ENCODE measurements at regions of chr1 and their contacts with region 1.

Region 1: GRCh38 chr1:111133866-111134265 is 6.0 kb downstream of the DRAM2 start:
- DNase-seq: no peak
- H3K4me3 ChIP-seq: no peak overlapping the region
- H3K27ac ChIP-seq: peak overlapping the region; percentile 98
- H3K4me1 ChIP-seq: peaks cover 83% of the 10 kb centered on the region
- CTCF ChIP-seq: no peak

Region 2: GRCh38 chr1:109864930-109865612 is 1268.8 kb before region 1 on chr1:
- CTCF ChIA-PET with region 1: no interaction called
- POLR2A ChIA-PET with region 1: no interaction called
- intact Hi-C with region 1: no loop called
- DNase-seq: no peak
- H3K4me3 ChIP-seq: no peak overlapping the region
- H3K27ac ChIP-seq: no peak overlapping the region
- H3K4me1 ChIP-seq: no peaks in the 10 kb centered on the region
- CTCF ChIP-seq: no peak

Region 3: GRCh38 chr1:111030590-111030989 is 103.3 kb before region 1 on chr1:
- CTCF ChIA-PET with region 1: no interaction called
- POLR2A ChIA-PET with region 1: no interaction called
- intact Hi-C with region 1: no loop called
- DNase-seq: peak; percentile 83
- H3K4me3 ChIP-seq: no peak overlapping the region
- H3K27ac ChIP-seq: no peak overlapping the region
- H3K4me1 ChIP-seq: no peaks in the 10 kb centered on the region
- CTCF ChIP-seq: peak; percentile 98

Region 4: GRCh38 chr1:111145542-111145941 is 11.7 kb after region 1 on chr1:
- CTCF ChIA-PET with region 1: no interaction called
- POLR2A ChIA-PET with region 1: interaction called, 12 read pairs
- intact Hi-C with region 1: no loop called
- DNase-seq: no peak
- H3K4me3 ChIP-seq: no peak overlapping the region
- H3K27ac ChIP-seq: no peak overlapping the region
- H3K4me1 ChIP-seq: peaks cover 51% of the 10 kb centered on the region
- CTCF ChIP-seq: no peak

Measured in OCI-LY7 (cell line).